ENCODE measurements at regions of chr6 and their contacts with region 1.

Region 1: DNA sequence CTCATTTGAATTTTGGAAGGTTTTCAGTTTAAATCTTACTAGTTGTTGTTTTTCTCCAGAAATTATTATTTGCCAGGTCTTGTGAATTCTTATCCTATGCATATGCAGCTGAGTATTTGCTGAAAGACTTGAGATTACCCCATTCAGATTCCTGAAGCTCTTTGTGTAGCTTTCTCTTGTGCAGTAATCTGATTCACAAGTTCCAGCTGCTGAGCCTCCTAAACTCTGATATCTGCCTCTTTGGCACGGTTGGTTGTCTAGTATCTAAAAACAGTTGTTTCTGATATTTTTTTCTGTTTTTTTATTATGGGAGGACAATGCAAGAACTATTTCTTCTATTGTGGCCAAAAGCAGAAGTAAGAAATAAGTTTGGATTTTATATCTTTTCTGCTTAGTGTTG is 863.9 kb upstream of the MANEA start:
- DNase-seq: no peak
- CTCF ChIP-seq: no peak

Region 2: DNA sequence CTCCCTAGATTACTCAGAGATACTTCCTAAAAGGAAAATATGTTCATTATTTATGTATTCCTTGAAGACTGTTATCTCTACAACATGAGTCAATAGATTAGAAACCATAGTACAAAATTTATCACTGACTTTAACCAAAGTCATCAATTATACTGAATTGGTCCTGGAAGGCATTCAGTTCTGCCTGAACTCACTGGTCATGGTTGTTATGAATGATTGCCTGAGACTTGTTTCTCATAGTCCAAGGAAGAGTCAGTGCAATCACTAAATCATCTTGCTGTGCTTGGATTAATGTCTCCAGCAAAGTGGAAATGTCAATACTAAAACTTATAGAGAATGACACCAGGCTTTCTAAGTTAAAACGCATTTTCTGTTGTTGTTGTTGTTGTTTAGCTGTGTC is 14.7 kb before region 1 on chr6:
- CTCF ChIA-PET with region 1: interaction called, 11 read pairs
- POLR2A ChIA-PET with region 1: no interaction called
- DNase-seq: no peak
- CTCF ChIP-seq: no peak